Sciatic nerve (tissue), 2 donors: ENCODE measurements at regions of chr12 and their contacts with region 1.

Region 1: GRCh38 chr12:13864081-13864673 is 117.2 kb downstream of the GRIN2B start:
- DNase-seq: peak; percentile 85
- ATAC-seq: peak; percentile 67

Region 2: DNA sequence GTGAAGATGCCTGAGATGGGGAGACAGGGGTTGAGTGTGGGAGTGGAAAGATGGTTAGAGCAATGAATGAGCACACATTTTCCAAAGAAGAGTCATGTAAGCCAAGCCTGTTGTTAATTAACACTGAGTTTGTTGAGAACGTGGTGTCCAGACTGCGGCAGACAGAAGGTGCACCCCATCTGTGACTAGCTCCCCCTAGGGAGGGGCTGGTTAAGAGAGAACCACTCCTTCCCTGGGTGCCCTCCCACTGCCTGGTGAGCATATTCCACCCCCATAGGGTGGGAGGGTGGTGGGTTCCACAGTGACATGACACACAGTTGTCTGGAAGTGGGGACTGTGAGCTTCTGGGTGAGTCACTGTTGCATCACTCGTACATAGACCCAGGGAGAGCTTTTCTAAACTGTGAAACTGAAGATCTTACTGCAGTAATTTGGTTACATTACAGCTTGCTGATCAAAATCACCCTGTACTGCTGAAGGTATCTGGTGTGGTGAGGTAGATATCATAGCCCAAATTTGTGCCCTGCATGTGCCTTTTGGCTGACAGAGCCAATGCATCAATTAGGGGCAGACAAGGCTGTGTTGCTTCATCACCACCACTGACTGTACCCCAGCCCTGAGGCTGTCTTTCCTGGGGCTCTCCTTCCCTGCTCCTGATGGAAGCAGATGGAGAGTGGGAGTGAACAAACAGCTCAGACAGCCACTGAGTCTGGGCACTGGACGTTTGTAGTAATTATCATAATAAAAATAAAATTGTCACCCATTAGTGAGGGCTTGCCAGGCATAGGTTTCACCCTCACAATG is 516.7 kb before region 1 on chr12:
- intact Hi-C with region 1: no loop called
- DNase-seq: no peak
- ATAC-seq: peak; percentile 59

Region 3: GRCh38 chr12:14048941-14049545 is 184.9 kb after region 1 on chr12:
- intact Hi-C with region 1: no loop called
- DNase-seq: no peak
- ATAC-seq: no peak

Region 4: GRCh38 chr12:14167005-14167628 is 302.9 kb after region 1 on chr12:
- intact Hi-C with region 1: loop called (anchors 10 kb)
- DNase-seq: no peak
- ATAC-seq: peak; percentile 49